ENCODE measurements at regions of chr19 and their contacts with region 1.

Region 1: GRCh38 chr19:7919610-7920518 is at the start of gene SNAPC2:
- DNase-seq: no peak
- ATAC-seq: peak; percentile 62
- H3K4me3 ChIP-seq: peak within 1 kb of the TSS; percentile 61 to 65
- H3K27ac ChIP-seq: peak within 1 kb of the TSS; percentile 94
- H3K4me1 ChIP-seq: peaks cover 20% of the 10 kb centered on the region
- H3K27me3 ChIP-seq: no peaks in the 10 kb centered on the region
- CTCF ChIP-seq: no peak
- total RNA-seq, gene SNAPC2: 63.0 TPM

Region 2: GRCh38 chr19:8241646-8242045 is 321.8 kb after region 1 on chr19:
- CTCF ChIA-PET with region 1: no interaction called
- POLR2A ChIA-PET with region 1: interaction called, 11 read pairs
- in situ Hi-C with region 1: no loop called
- intact Hi-C with region 1: no loop called
- DNase-seq: no peak
- ATAC-seq: no peak
- H3K4me3 ChIP-seq: no peak overlapping the region
- H3K27ac ChIP-seq: no peak overlapping the region
- H3K4me1 ChIP-seq: peaks cover 9% of the 10 kb centered on the region
- H3K27me3 ChIP-seq: no peaks in the 10 kb centered on the region
- CTCF ChIP-seq: no peak

Measured in Panc1 (cell line).